Activated naive CD8-positive, alpha-beta T cell treated with anti-CD3 and anti-CD28 coated beads, Interleukin-2, amount 10 ng/mL, durations not matched to agents 7 days and 5 days (primary cell): ENCODE measurements at regions of chr11 and their contacts with region 1.

Region 1: DNA sequence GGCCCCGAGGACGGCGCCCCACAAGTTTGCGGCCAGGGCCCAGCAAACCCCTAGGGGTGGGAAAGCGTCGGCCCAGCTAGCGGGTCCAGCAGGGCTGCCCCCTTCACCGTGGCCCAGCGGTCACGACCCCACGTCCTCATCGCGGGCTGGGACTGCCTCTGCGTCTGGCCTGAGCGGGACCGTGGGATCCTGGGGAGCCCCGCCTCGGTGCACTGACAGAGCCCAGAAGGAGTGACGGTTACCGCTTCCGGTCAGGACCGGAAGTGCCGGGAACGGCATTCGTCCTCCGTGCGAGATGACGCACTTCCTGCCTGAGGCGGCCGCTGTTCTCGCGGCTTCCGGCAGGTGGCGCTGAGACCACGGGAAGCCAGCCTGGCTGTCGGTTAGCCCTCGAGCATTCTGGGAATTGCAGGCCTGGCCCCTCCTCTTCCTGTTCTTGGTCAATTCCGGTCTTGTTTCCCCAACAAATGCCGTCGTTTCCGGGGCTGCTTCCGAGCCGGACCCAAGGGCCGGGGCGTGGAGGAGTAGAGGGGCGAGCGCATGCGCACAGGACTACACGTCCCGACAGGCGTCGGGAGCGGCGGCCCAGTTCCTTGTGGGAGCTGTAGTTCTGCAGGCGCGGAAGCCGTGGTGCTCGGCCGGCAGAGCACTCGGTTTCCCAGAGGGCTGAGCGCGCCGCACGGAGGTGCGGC is at the start of gene TSSC4:
- DNase-seq: peak; percentile 100
- ATAC-seq: peak; percentile 87
- H3K4me3 Mint-ChIP-seq: peak within 1 kb of the TSS; percentile 90
- H3K27ac Mint-ChIP-seq: peak within 1 kb of the TSS; percentile 90
- H3K4me1 Mint-ChIP-seq: peaks cover 3% of the 10 kb centered on the region
- H3K27me3 Mint-ChIP-seq: no peaks in the 10 kb centered on the region
- total RNA-seq, gene TSSC4: 46.8 to 48.2 TPM

Region 2: DNA sequence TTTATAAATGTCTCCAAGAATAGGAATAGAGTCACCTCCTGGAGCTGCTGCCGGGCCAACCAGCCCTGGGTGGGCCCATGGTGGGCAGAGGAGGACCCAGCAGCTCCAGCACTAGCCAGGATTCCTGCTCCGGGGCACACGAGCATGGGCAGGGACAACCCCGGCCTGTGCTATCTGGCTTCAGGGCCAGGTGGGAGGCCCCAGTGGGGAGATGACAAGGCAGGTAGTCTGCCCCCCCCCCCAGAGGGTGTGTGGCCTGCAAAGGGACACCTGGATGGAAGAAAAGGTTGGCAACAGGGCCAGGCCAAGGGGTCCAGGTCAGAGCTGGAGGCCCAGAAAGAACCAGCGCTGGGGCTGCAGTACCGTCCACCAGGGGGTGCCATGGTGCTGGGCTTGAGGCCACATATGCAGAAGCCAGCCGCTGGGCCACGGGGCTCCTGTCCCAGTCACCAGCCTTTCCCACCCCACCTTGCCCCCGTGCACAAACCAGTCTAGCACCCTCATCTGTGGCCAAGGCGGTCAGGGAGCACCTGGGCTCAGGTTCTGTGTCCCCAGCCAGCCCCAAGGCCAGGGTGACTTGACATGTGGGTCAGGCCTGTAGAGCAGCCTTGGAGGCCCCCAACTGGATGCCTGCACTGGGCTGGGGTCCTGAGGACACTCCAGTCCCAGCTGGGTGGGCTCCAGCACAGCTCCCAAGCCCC is 94.9 kb before region 1 on chr11:
- POLR2A ChIA-PET with region 1: interaction called, 32 read pairs
- DNase-seq: peak; percentile 91
- ATAC-seq: peak; percentile 36
- H3K4me3 Mint-ChIP-seq: peak overlapping the region; percentile 100
- H3K27ac Mint-ChIP-seq: peak overlapping the region; percentile 91
- H3K4me1 Mint-ChIP-seq: peaks cover 21% of the 10 kb centered on the region
- H3K27me3 Mint-ChIP-seq: no peaks in the 10 kb centered on the region

Region 3: GRCh38 chr11:2325719-2326118 is 74.5 kb before region 1 on chr11:
- POLR2A ChIA-PET with region 1: no interaction called
- DNase-seq: no peak
- ATAC-seq: no peak
- H3K4me3 Mint-ChIP-seq: no peak overlapping the region
- H3K27ac Mint-ChIP-seq: no peak overlapping the region
- H3K4me1 Mint-ChIP-seq: no peaks in the 10 kb centered on the region
- H3K27me3 Mint-ChIP-seq: peaks cover 23% of the 10 kb centered on the region

Region 4: DNA sequence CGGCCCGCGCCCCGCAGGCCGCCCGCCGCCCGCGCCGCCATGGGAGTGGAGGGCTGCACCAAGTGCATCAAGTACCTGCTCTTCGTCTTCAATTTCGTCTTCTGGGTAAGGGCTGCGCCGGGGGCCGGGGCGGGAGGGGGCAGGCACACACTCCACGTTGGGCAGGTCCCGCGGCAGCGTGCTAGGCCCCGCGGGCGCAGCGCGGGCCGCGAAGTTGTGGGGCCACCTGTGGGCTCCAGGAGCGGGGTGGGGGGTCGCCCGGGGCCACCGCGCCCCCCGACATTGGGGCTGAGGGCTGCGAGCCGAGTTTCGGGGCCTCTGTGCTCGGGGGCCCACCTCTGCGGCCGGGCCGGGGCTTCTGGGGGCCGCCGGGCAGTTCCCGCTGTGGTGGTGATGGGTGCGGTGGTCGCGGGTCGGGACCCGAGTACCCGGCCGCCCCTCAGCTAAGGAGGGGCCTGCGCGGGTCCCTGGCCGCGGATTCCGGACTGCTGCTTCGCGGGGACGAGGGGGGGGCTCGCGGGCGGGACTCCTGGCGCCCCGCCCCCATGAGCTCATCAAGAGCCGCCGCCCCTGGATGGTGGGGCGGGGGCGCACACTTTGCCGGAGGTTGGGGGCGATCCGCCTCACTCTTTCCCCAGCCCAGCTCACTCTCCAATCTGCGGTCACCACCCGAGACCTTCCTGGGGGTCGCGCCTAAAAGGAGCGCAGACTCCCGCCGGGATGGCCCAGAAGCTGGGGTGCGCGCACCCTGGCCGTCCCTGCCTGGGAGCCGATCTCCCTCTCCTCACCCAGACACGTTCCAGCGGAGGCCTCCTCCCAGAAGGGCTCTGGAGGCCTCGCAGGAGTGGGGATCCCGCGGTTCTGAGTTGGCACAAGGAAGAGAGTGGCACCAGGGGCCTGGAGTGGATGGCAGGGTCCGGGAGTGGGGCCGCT is 22.4 kb before region 1 on chr11:
- POLR2A ChIA-PET with region 1: interaction called, 14 read pairs
- DNase-seq: peak; percentile 70
- ATAC-seq: peak; percentile 51
- H3K4me3 Mint-ChIP-seq: peak overlapping the region; percentile 84
- H3K27ac Mint-ChIP-seq: peak overlapping the region; percentile 75
- H3K4me1 Mint-ChIP-seq: peaks cover 7% of the 10 kb centered on the region
- H3K27me3 Mint-ChIP-seq: peaks cover 4% of the 10 kb centered on the region

Region 5: GRCh38 chr11:2387266-2387987 is 12.8 kb before region 1 on chr11:
- POLR2A ChIA-PET with region 1: interaction called, 13 read pairs
- DNase-seq: no peak
- ATAC-seq: peak; percentile 30
- H3K4me3 Mint-ChIP-seq: peak overlapping the region; percentile 25
- H3K27ac Mint-ChIP-seq: peak overlapping the region; percentile 63
- H3K4me1 Mint-ChIP-seq: peaks cover 36% of the 10 kb centered on the region
- H3K27me3 Mint-ChIP-seq: no peaks in the 10 kb centered on the region

Region 6: DNA sequence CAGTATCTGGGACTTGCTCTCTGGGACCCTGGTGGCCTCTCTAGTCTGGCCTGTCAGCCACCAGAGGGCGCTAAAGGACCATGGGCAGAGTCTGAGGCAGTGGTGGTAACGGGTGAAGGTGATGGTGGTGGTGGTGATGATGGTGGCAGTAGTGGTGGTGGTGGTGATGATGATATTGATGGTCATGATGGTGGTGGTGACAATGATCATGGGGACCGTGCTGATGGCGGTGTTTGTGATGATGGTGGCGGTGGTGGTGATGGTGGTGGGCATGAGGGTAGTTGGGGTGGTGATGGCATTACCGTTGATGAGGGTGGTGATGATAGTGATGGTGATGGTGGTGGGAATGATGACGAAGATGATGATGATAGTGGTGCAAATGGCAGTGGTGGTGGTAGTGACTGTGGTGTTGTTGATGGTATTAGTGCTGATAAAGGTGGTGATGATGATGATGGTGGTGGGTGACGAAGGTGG is 28.1 kb after region 1 on chr11:
- POLR2A ChIA-PET with region 1: no interaction called
- DNase-seq: peak; percentile 84
- ATAC-seq: peak; percentile 85
- H3K4me3 Mint-ChIP-seq: no peak overlapping the region
- H3K27ac Mint-ChIP-seq: no peak overlapping the region
- H3K4me1 Mint-ChIP-seq: peaks cover 2% of the 10 kb centered on the region
- H3K27me3 Mint-ChIP-seq: peaks cover 2% of the 10 kb centered on the region